Endothelial cell of umbilical vein (primary cell): ENCODE measurements at regions of chr2 and their contacts with region 1.

Region 1: GRCh38 chr2:152456262-152456661 is 121.3 kb downstream of the FMNL2 start:
- DNase-seq: no peak
- H3K4me3 ChIP-seq: no peak overlapping the region
- H3K27ac ChIP-seq: no peak overlapping the region
- H3K4me1 ChIP-seq: no peaks in the 10 kb centered on the region
- H3K27me3 ChIP-seq: no peaks in the 10 kb centered on the region
- CTCF ChIP-seq: no peak
- POLR2A ChIP-seq: no peak

Region 2: DNA sequence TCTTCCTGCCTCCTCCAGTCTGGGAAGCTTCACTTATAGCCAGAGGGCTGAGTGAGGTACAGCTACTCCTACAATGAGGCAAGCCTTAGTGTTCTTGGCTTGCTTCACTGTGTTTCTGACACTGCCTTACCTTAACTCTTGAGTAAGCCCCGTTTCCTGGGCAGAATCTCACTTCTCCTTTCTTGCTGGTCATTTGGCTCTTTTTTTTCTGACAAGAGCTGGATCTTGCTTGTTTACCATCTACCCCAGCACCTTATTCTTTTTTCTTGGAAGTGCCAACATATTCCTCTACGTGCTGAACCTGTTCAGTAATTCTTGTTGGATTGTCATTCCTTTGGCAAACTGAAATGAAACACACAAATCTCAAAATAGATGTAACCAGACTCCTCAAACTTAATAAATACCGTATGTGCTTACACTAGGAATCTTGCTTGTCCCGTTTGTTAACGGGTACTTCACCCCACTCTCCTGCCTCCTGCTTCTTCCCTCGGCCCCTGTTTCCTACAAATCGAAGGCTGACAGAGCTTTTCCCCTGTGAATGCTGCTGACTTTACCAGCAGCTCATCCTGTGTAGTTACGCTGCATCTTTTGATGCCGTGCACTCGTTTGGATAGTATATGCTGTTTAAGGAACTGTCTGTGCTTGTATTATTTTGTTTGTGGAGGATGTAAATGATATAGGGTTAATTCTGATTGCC is 10.9 kb after region 1 on chr2:
- CTCF ChIA-PET with region 1: interaction called, 12 read pairs
- POLR2A ChIA-PET with region 1: no interaction called
- dilution Hi-C with region 1: no loop called
- intact Hi-C with region 1: no loop called
- DNase-seq: no peak
- H3K4me3 ChIP-seq: no peak overlapping the region
- H3K27ac ChIP-seq: no peak overlapping the region
- H3K4me1 ChIP-seq: peaks cover 10% of the 10 kb centered on the region
- H3K27me3 ChIP-seq: no peaks in the 10 kb centered on the region
- CTCF ChIP-seq: no peak
- POLR2A ChIP-seq: no peak